Mammary epithelial cell (primary cell): ENCODE measurements at regions of chr20 and their contacts with region 1.

Region 1: DNA sequence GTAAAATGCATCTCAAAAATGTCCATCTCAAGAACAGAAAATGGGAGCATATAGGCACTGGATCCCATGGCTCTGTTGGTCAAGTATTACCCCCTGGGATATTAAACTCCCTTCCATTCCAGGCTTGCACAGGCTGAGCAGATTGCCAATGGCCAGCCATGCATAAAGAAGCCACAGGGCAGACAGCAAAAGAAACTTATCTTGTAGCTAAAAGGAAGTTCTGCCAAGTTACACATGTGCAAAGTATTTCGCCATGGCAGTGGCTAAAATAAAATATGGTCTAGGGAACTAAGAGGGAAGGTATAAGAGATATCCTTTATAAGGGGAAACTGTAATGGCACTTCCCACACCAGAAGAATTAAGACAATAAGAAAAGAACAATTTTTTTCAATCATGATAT is 415.6 kb upstream of the BTBD3 start:
- DNase-seq: no peak
- H3K4me3 ChIP-seq: no peak overlapping the region
- H3K27ac ChIP-seq: no peak overlapping the region
- H3K4me1 ChIP-seq: peaks cover 22% of the 10 kb centered on the region
- H3K27me3 ChIP-seq: no peaks in the 10 kb centered on the region
- CTCF ChIP-seq: no peak

Region 2: DNA sequence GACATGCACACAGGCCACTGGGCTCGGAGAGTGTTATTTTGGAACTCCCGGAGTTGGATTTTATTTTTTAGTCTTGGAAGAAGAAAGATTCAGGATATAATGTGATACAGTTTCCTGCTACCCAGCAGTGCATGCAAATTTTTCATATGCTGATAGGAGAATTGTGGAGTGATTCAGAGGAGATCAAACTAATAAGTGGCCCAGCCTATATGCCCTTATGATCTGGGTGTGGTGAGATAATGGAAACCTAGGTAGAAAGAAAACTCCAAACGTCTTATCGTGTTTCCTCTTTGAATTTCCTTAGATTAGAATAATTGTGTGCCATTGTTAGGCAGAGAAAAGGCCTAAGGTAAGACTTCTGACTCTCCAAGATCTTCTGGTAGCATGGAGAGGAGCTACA is 14.4 kb after region 1 on chr20:
- CTCF ChIA-PET with region 1: no interaction called
- dilution Hi-C with region 1: no loop called
- in situ Hi-C with region 1: no loop called
- intact Hi-C with region 1: loop called (anchors 1 kb)
- DNase-seq: no peak
- H3K4me3 ChIP-seq: no peak overlapping the region
- H3K27ac ChIP-seq: no peak overlapping the region
- H3K4me1 ChIP-seq: no peaks in the 10 kb centered on the region
- H3K27me3 ChIP-seq: no peaks in the 10 kb centered on the region
- CTCF ChIP-seq: no peak